IMR-90 (cell line): ENCODE measurements at regions of chr2 and their contacts with region 1.

Region 1: DNA sequence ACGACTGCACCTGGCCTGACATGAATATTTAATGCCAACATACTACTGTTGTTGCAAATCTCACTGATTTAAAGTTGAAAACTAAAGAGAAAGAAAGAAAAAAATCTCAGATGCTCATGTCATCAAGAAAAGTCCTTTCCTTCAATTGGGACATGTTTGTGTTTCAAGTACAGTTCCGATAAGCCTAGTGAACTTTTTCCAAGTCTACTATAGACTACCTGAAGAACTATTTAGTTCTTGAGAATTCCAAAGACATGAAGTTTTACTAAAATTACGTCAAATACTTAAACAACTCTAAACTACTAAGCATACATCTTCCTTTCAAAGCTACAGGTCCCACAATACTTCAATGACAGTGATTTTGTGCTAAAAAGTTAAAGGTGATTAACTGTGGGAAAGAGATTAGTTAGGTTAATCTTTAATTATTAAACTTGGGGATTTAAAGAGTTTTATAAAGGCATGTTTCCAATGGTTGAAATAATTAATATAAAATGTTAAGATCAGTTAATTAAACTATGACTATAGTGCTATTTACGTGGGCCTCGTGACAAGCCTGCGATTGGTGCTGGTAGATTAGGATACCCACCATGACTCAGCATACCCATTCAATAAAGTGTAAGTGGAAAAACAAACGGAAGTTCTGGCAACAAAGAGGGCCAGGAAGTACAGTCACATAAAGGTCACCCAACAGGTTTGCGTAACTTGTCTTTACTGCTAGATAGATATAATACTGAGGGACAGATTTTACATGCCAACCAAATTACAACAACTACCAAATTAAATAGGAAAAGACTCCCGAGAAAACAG is 55.5 kb downstream of the SEPTIN10 start:
- DNase-seq: peak; percentile 83
- ATAC-seq: peak; percentile 35
- H3K4me3 ChIP-seq: no peak overlapping the region
- H3K27ac ChIP-seq: no peak overlapping the region
- H3K4me1 ChIP-seq: peaks cover 6% of the 10 kb centered on the region
- H3K27me3 ChIP-seq: no peaks in the 10 kb centered on the region
- CTCF ChIP-seq: no peak
- POLR2A ChIP-seq: no peak
- RAD21 ChIP-seq: no peak

Region 2: GRCh38 chr2:109545828-109546713 is 12.2 kb before region 1 on chr2:
- CTCF ChIA-PET with region 1: interaction called, 10 read pairs
- POLR2A ChIA-PET with region 1: interaction called, 3 read pairs
- dilution Hi-C with region 1: no loop called
- in situ Hi-C with region 1: no loop called
- intact Hi-C with region 1: no loop called
- DNase-seq: peak; percentile 60
- ATAC-seq: peak; percentile 98
- H3K4me3 ChIP-seq: no peak overlapping the region
- H3K27ac ChIP-seq: no peak overlapping the region
- H3K4me1 ChIP-seq: peaks cover 2% of the 10 kb centered on the region
- H3K27me3 ChIP-seq: no peaks in the 10 kb centered on the region
- CTCF ChIP-seq: peak; percentile 92
- POLR2A ChIP-seq: 0 out of 2 replicates have a peak, but pooled peaks have one; percentile 47
- RAD21 ChIP-seq: peak; percentile 94

Region 3: DNA sequence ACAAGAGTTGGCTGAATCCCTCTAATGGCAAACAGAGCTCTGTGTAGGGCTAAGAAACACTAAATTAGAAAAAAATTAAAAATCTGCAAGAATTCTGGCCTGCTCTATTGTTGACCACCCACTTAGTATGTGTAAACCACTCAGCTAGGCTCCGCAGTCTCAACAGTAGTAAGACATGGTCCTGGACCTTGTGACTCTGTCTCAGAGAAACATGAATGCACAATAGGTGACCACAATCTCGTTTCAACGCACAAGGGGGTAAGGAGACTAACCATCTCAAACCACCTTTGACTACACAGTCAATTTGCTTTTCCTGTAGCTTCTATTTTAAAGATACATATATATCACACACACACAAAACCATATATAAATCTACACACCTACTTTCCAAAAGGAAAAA is 39.0 kb after region 1 on chr2:
- CTCF ChIA-PET with region 1: no interaction called
- POLR2A ChIA-PET with region 1: no interaction called
- dilution Hi-C with region 1: no loop called
- in situ Hi-C with region 1: no loop called
- intact Hi-C with region 1: loop called (anchors 5 kb)
- DNase-seq: no peak
- ATAC-seq: no peak; the same call in 1 of the 2 replicates
- H3K4me3 ChIP-seq: no peak overlapping the region
- H3K27ac ChIP-seq: no peak overlapping the region
- H3K4me1 ChIP-seq: peaks cover 5% of the 10 kb centered on the region
- H3K27me3 ChIP-seq: no peaks in the 10 kb centered on the region
- CTCF ChIP-seq: no peak
- POLR2A ChIP-seq: no peak
- RAD21 ChIP-seq: no peak

Region 4: GRCh38 chr2:109613922-109614714 is 55.8 kb after region 1 on chr2 and contains the starts of genes SEPTIN10 and SOWAHC:
- CTCF ChIA-PET with region 1: no interaction called
- POLR2A ChIA-PET with region 1: no interaction called
- dilution Hi-C with region 1: no loop called
- in situ Hi-C with region 1: no loop called
- intact Hi-C with region 1: loop called (anchors 5 kb)
- DNase-seq: peak; percentile 99
- ATAC-seq: peak; percentile 87
- H3K4me3 ChIP-seq: peak within 1 kb of the TSS; percentile 96
- H3K27ac ChIP-seq: peak within 1 kb of the TSS; percentile 87
- H3K4me1 ChIP-seq: peaks cover 18% of the 10 kb centered on the region
- H3K27me3 ChIP-seq: no peaks in the 10 kb centered on the region
- CTCF ChIP-seq: no peak
- POLR2A ChIP-seq: peak; percentile 93
- RAD21 ChIP-seq: no peak
- total RNA-seq, gene SEPTIN10: 82.6 and 83.9 TPM in 2 replicates
- total RNA-seq, gene SOWAHC: 4.8 and 8.9 TPM in 2 replicates

Region 5: DNA sequence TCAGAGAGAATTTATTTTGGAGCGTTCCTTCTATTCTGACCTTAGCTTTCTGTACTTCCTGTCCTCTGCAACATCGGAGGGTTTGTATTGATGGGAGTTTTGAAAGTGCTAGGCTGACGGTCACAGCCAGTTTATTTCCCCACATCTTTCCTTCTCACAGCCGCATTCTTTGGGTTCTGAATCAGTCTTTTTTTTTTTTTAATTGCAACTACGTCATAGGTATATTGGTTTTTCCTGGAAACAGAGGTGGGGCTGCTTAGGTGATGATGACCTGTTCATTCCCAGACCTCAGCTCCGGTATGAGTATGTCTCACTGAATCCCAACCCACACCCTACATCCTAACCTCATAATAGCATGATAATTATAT is 144.3 kb after region 1 on chr2:
- CTCF ChIA-PET with region 1: no interaction called
- POLR2A ChIA-PET with region 1: no interaction called
- dilution Hi-C with region 1: no loop called
- in situ Hi-C with region 1: no loop called
- intact Hi-C with region 1: loop called (anchors 10 kb)
- DNase-seq: peak; percentile 63
- ATAC-seq: peak; percentile 22; the same call in 1 of the 2 replicates
- H3K4me3 ChIP-seq: no peak overlapping the region
- H3K27ac ChIP-seq: no peak overlapping the region
- H3K4me1 ChIP-seq: peaks cover 5% of the 10 kb centered on the region
- H3K27me3 ChIP-seq: no peaks in the 10 kb centered on the region; the same call in 1 of the 2 replicates
- CTCF ChIP-seq: no peak
- POLR2A ChIP-seq: no peak
- RAD21 ChIP-seq: no peak

Region 6: DNA sequence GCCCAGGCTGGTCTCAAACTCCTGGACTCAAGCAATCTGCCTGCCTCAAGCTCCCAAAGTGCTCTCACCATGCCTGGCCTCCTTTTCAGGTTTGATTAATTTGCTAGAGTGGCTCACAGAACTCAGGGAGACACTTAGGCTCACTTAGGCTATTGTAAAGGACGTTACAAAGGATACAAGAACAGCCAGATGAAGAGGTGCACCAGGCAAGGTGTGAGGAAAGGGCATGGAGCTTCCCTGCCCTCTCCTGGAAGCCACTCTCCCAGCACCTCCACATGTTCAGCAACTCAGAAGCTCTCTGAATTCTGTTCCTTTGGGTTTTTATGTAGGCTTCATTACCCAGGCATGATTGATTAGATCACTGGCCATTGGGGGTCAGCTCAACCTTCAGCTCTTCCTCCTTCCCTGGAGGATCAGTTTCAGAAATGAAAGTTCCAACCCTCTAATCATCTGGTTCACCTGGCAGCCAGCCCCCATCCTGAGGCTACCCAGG is 157.1 kb after region 1 on chr2:
- CTCF ChIA-PET with region 1: no interaction called
- POLR2A ChIA-PET with region 1: no interaction called
- dilution Hi-C with region 1: no loop called
- in situ Hi-C with region 1: loop called (anchors 10 kb)
- intact Hi-C with region 1: no loop called
- DNase-seq: no peak
- ATAC-seq: no peak
- H3K4me3 ChIP-seq: no peak overlapping the region
- H3K27ac ChIP-seq: no peak overlapping the region
- H3K4me1 ChIP-seq: no peaks in the 10 kb centered on the region
- H3K27me3 ChIP-seq: peaks cover 27% of the 10 kb centered on the region
- CTCF ChIP-seq: peak; percentile 13; the same call in 1 of the 2 replicates
- POLR2A ChIP-seq: no peak
- RAD21 ChIP-seq: no peak